ENCODE measurements at regions of chr2 and their contacts with region 1.

Region 1: DNA sequence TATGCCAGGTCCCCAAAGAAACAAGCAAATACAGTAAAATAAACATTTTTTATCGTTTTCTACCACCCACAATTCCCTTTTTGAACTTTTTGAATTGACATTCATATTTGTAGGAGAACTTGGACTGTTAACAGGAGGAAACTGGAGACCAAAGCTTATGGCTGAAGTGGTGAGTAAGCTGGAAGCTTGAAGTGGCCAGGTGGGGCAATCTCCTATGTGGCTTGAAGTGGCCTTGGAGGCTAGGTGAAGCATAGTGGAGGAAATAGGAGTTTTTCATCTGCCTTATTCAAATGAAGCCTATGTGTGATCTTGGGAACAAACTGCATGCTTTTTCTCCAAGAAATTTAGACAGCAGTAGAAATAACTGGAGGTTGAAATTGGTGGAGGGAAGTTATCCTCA is 962.9 kb upstream of the FANCL start:
- DNase-seq: no peak
- H3K4me3 ChIP-seq: no peak overlapping the region
- CTCF ChIP-seq: no peak
- POLR2A ChIP-seq: no peak

Region 2: DNA sequence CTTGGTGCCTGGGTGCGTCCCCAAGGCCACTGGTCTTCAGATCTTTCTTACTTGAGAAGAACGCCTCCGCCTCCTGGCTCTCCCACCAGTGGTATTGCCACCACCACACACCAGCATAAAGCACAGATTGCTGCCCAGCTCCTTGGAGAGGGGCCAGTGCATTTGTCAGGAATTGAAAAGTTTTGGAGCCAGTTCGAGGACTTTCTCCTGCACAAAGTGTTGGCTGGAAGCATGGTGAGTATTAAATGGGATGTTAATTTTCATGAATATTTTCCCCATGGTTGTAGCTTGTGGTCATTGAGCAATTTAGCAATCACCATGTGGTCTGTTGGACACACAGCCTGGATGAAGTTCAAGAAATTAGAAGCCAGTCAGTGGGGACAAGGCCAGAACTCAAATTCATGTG is 278.4 kb before region 1 on chr2:
- intact Hi-C with region 1: no loop called
- DNase-seq: peak in 1 of 2 donors; percentile 17
- H3K4me3 ChIP-seq: no peak overlapping the region
- CTCF ChIP-seq: no peak
- POLR2A ChIP-seq: no peak

Region 3: GRCh38 chr2:59012249-59012648 is 191.8 kb before region 1 on chr2:
- intact Hi-C with region 1: loop called (anchors 5 kb)
- DNase-seq: no peak
- H3K4me3 ChIP-seq: no peak overlapping the region
- CTCF ChIP-seq: no peak
- POLR2A ChIP-seq: no peak

Region 4: DNA sequence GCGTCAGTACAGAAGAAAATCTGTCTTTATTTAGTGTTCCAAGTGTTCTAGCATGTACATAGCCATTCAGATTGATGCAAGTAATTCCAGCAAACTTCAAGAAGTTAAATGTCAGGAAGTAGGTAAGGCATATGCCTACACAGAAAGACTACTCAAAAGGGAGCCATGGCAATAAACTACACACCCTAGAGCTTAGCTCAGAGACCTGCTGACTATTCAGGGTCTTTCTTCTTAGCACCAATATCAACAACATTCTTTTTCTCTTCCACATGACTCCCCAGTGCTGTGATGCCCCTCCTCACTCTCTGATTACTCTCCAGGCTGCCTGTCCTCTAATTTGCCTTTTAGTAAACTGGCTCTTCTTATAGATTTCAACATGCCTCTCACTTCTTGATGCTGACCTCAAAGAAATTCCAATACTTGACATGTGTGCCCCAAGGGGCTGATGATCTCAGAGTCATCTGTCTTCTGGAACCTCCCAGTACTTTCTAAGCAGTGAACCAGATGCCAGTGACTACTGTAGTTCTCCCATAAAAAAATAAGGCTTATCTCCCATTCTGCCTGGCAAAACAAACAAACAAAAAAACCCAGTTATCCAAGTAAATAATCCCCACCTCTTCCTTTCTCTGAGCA is 53.7 kb before region 1 on chr2:
- intact Hi-C with region 1: no loop called
- DNase-seq: no peak
- H3K4me3 ChIP-seq: no peak overlapping the region
- CTCF ChIP-seq: no peak
- POLR2A ChIP-seq: no peak

Region 5: GRCh38 chr2:59276033-59276432 is 72.0 kb after region 1 on chr2:
- intact Hi-C with region 1: no loop called
- DNase-seq: no peak
- H3K4me3 ChIP-seq: no peak overlapping the region
- CTCF ChIP-seq: no peak
- POLR2A ChIP-seq: no peak